ENCODE measurements at regions of chr1 and their contacts with region 1.

Region 1: DNA sequence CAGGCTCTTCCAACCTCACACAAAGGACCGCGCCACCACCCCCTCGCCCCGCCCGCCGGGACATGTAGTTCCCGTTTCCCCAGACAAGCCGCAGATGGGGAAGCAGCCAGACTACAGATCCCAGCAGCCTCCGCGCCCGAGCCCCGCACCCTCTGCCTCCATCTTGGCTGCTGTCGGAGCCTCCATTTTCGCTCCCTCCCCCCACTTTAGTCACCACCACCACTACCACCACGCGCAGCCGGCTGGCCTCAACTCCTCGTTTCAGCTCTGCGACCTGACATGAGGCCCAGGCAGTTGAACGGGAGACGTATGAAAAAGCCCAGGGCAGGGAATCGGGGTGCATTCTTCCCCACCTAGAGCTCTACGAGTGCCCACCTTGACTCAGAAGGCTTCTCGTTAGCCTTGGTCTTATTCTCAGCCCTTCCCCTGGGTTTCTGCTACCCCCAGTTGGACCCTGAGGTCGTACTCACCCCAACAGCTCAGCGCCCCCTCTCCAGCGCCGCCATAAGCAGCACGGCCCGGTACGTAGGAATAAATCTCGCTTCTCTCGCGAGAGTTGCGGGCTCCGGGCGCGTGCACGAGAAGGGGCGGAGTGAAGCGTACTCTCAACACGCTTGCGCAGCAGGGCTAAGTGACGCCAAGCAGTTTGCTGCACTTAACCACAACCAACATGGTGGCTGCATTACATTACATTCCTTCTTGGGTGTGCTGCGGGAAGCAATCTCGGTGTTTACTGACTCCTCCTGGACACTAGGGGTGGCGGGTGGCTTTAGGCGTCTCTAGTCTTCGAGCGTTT is at the start of gene CSDE1:
- DNase-seq: peak; percentile 98
- ATAC-seq: peak; percentile 87
- H3K4me3 Mint-ChIP-seq: peak within 1 kb of the TSS; percentile 99
- H3K27ac Mint-ChIP-seq: peak within 1 kb of the TSS; percentile 99
- H3K4me1 Mint-ChIP-seq: peaks cover 53% of the 10 kb centered on the region
- H3K27me3 Mint-ChIP-seq: no peaks in the 10 kb centered on the region
- total RNA-seq, gene CSDE1: 458 to 553 TPM

Region 2: GRCh38 chr1:112955781-112956543 is 1801.7 kb before region 1 on chr1 and contains the start of gene SLC16A1:
- CTCF ChIA-PET with region 1: no interaction called
- POLR2A ChIA-PET with region 1: no interaction called
- intact Hi-C with region 1: loop called in 1 of 2 experiments (anchors 5 kb)
- DNase-seq: peak; percentile 96
- ATAC-seq: peak; percentile 75
- H3K4me3 Mint-ChIP-seq: peak within 1 kb of the TSS; percentile 97
- H3K27ac Mint-ChIP-seq: peak within 1 kb of the TSS; percentile 100
- H3K4me1 Mint-ChIP-seq: peaks cover 56% of the 10 kb centered on the region
- H3K27me3 Mint-ChIP-seq: no peaks in the 10 kb centered on the region
- total RNA-seq, gene SLC16A1: 70.0 to 70.4 TPM

Region 3: GRCh38 chr1:113904674-113905434 is 852.8 kb before region 1 on chr1 and contains the starts of genes AP4B1 and DCLRE1B:
- CTCF ChIA-PET with region 1: no interaction called
- POLR2A ChIA-PET with region 1: no interaction called
- intact Hi-C with region 1: loop called in 1 of 2 experiments (anchors 1 kb)
- DNase-seq: peak; percentile 99
- ATAC-seq: peak; percentile 92
- H3K4me3 Mint-ChIP-seq: peak within 1 kb of the TSS; percentile 85
- H3K27ac Mint-ChIP-seq: peak within 1 kb of the TSS; percentile 96
- H3K4me1 Mint-ChIP-seq: peaks cover 55% of the 10 kb centered on the region
- H3K27me3 Mint-ChIP-seq: no peaks in the 10 kb centered on the region
- total RNA-seq, gene AP4B1: 27.7 to 39.2 TPM
- total RNA-seq, gene DCLRE1B: 18.2 to 21.8 TPM

Region 4: DNA sequence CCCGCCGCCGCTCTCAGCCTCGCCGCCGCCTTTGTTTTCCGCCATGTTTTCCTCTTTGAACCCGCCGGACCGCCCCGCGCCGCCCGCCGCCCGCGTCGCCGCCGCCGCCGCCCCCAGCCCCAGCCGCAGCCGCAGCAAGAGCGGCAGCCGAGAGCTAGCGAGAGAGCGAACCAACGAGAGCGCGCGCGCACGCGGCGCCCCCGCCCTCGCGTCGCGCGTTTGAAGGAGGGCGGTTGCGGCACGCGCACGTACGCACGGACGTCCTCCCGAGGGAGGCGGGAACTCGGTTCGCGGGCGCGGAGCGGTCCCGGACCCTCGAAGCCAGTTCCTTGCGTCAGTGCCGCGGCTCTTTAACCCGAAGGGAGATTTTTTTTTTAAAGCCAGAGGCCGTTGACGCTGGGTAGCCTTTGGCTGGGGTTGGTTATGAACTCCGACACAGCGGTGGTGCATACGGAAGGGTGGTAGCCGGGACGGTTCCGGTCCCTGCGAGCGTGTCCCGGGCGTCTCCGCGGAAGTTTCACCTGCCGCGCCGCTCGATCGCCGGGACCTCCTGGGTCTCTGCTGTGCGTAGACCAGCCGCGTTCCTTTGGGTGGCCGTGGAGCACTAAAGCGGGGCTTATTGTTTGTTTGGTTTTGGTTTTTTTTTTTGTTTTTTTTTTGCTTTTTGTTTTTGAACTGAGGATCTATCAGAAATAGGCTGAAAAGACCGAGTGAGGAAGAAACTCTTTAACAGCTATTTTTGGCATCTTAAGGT is 246.4 kb before region 1 on chr1 and contains the start of gene TRIM33:
- CTCF ChIA-PET with region 1: no interaction called
- POLR2A ChIA-PET with region 1: interaction called, 4 read pairs
- intact Hi-C with region 1: loop called (anchors 1 kb)
- DNase-seq: peak; percentile 95
- ATAC-seq: peak; percentile 77
- H3K4me3 Mint-ChIP-seq: peak within 1 kb of the TSS; percentile 81
- H3K27ac Mint-ChIP-seq: peak within 1 kb of the TSS; percentile 98
- H3K4me1 Mint-ChIP-seq: peaks cover 43% of the 10 kb centered on the region
- H3K27me3 Mint-ChIP-seq: no peaks in the 10 kb centered on the region
- total RNA-seq, gene TRIM33: 32.5 to 41.6 TPM

Region 5: GRCh38 chr1:114716304-114717170 is 41.1 kb before region 1 on chr1 and contains the start of gene NRAS:
- CTCF ChIA-PET with region 1: interaction called, 4 read pairs
- POLR2A ChIA-PET with region 1: interaction called, 4 read pairs
- intact Hi-C with region 1: loop called (anchors 1 kb)
- DNase-seq: peak; percentile 97
- ATAC-seq: peak; percentile 91
- H3K4me3 Mint-ChIP-seq: peak within 1 kb of the TSS; percentile 95
- H3K27ac Mint-ChIP-seq: peak within 1 kb of the TSS; percentile 97
- H3K4me1 Mint-ChIP-seq: peaks cover 30% of the 10 kb centered on the region
- H3K27me3 Mint-ChIP-seq: no peaks in the 10 kb centered on the region
- total RNA-seq, gene NRAS: 53.0 to 55.0 TPM

Region 6: DNA sequence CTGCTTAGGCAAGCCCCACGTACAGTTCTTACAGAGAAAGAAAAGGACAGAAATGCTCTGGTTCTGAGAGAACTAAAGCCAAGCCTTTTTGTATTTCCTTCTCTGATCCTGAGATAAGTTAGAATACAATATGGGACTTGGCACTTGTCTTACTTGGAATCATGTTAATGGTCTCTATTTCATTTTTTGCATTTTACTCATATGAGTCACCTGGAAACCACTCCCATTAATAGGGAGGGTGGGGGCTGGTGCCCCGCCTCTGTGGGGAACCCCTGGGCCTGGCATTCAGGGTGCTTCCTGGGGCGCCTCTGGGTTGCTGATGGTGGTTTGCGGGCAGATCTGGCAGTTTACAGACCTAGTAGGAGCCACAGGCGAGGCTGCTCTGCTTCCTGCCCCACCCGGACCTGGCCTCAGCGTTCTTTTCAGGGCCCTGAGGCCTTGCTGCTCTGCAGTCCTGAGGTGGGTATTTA is 304.9 kb after region 1 on chr1:
- CTCF ChIA-PET with region 1: no interaction called
- POLR2A ChIA-PET with region 1: no interaction called
- intact Hi-C with region 1: loop called in 1 of 2 experiments (anchors 2 kb)
- DNase-seq: peak; percentile 93
- ATAC-seq: peak; percentile 88
- H3K4me3 Mint-ChIP-seq: peak overlapping the region; percentile 23
- H3K27ac Mint-ChIP-seq: peak overlapping the region; percentile 75
- H3K4me1 Mint-ChIP-seq: peaks cover 40% of the 10 kb centered on the region
- H3K27me3 Mint-ChIP-seq: no peaks in the 10 kb centered on the region